CD4-positive, alpha-beta memory T cell (primary cell): ENCODE measurements at regions of chr14 and their contacts with region 1.

Region 1: DNA sequence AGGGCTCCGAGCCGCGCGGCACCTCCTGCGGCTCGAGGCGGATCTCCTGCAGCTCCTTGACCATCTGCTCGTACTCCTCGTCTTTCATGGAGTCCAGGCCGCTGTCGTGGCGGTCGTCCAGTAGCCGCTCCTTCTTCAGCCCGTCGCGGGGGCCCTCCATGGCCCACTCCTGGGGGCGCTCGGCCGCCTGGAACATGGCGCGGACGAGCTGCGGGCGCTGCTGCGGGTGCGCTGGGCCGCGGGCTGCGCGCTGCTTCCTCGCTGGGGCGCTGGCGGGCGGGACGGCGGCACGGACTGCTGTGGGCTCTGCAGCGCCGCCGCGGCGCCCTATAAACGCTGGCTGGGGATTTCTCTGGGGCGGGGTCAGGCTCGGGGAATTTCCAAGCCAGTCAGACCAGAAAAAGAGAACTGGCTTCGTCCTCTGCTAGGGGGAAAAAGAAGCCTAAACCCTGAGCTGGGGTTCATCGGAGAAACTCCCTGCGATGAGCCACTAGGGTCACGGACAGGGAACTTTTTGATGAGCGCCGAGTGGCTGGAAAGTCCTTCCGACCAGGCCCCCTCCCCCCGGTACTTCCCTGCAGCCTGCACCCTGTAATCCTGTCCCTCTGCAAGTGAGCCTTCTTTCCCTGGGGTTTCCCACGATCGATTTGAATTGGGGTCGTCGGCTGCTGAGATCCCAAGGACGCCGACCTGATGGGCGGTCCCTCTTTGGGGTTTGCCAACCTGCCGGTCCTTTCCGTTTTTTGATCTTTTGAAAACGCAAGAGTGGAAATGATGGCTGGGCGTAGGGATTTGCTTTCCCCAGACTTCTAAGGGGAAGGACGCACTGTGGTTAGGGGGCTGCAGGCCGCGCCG is at the start of gene NFKBIA:
- DNase-seq: peak; percentile 94 to 96 (median 95)
- H3K4me3 ChIP-seq: peak within 1 kb of the TSS; percentile 88 to 98
- H3K4me3 Mint-ChIP-seq: peak within 1 kb of the TSS; percentile 93 to 97 (median 95)
- H3K27ac ChIP-seq: peak within 1 kb of the TSS; percentile 100
- H3K27ac Mint-ChIP-seq: peak within 1 kb of the TSS; percentile 99 to 100 (median 99)
- H3K4me1 ChIP-seq: peaks cover 60% of the 10 kb centered on the region
- H3K4me1 Mint-ChIP-seq: peaks cover 34 to 71% (median 49%) of the 10 kb centered on the region in 4 donors
- H3K27me3 ChIP-seq: no peaks in the 10 kb centered on the region
- H3K27me3 Mint-ChIP-seq: peaks cover 0 to 2% of the 10 kb centered on the region in 2 donors
- total RNA-seq, gene NFKBIA: 119 to 120 TPM

Region 2: GRCh38 chr14:34982417-34983147 is 422.1 kb before region 1 on chr14 and contains the start of gene SRP54:
- CTCF ChIA-PET with region 1: interaction called, 6 read pairs
- POLR2A ChIA-PET with region 1: interaction called, 39 read pairs
- intact Hi-C with region 1: loop called (anchors 1 kb)
- DNase-seq: peak; percentile 99 to 100 (median 100)
- H3K4me3 ChIP-seq: peak within 1 kb of the TSS; percentile 87 to 91
- H3K4me3 Mint-ChIP-seq: no peak within 1 kb of the TSS
- H3K27ac ChIP-seq: peak within 1 kb of the TSS; percentile 98
- H3K27ac Mint-ChIP-seq: no peak within 1 kb of the TSS
- H3K4me1 ChIP-seq: peaks cover 47% of the 10 kb centered on the region
- H3K4me1 Mint-ChIP-seq: peaks cover 11 to 23% (median 18%) of the 10 kb centered on the region in 4 donors
- H3K27me3 ChIP-seq: no peaks in the 10 kb centered on the region
- H3K27me3 Mint-ChIP-seq: no peaks in the 10 kb centered on the region
- total RNA-seq, gene SRP54: 59.8 to 62.7 TPM

Region 3: DNA sequence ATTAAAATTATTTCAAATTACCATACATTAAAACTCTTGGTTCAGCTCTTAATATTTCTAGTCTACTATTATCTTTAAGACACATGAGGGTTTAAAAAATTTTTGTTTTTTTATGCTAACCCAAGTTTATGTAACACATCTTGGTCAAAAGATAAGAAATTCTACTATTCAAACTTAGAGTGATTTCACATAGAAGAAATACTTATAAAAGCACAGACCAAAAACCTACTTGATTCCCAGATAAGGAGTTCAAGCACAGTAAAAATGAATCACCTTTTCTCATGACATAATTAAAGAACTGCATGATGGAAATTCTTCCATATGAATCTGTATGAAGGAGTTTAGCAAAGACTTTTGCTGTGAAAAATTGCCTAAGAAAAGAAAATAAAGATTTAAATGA is 296.8 kb before region 1 on chr14:
- CTCF ChIA-PET with region 1: no interaction called
- POLR2A ChIA-PET with region 1: no interaction called
- intact Hi-C with region 1: no loop called
- DNase-seq: no peak
- H3K4me3 ChIP-seq: no peak overlapping the region
- H3K4me3 Mint-ChIP-seq: no peak overlapping the region
- H3K27ac ChIP-seq: no peak overlapping the region
- H3K27ac Mint-ChIP-seq: no peak overlapping the region
- H3K4me1 ChIP-seq: no peaks in the 10 kb centered on the region
- H3K4me1 Mint-ChIP-seq: peaks cover 0 to 7% (median 2%) of the 10 kb centered on the region in 4 donors
- H3K27me3 ChIP-seq: no peaks in the 10 kb centered on the region
- H3K27me3 Mint-ChIP-seq: no peaks in the 10 kb centered on the region

Region 4: DNA sequence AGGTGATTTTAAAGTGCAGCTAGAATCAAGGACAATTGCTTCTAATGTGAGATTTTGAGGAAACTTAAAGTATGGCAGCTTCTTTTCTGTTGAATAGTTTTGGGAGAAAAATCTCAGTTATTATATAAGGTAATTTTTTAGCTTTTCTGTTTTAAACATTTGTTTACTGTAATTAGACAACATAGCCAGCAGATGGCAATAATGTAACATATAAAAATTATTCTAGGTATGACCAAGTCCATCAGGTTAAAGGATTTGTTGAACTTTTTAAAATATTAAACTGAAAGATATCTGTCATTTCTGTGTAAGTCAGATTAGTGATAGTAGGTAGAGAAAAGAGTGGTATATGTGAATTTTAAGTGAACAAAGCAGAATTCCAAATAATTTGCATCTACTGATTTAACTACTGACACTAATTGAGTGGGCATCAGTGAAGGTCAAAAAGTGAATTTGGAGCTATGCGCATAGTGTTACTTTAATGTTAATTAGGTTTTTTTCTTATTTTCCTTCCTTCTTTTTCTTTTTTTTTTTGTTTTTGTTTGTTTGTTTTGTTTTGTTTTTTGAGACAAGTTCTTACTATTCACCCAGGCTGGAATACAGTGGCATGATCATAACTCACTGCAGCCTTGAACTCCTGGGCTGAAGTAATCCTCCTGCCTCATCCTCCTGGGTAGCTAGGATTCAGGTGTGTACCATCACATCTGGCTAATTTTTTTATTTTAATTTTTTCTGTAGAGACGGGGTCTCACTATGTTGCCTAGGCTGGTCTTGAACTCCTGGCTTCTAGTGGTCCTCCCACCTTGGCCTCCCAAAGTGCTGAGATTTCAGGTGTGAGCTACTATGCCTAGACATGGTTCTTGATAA is 263.7 kb before region 1 on chr14:
- CTCF ChIA-PET with region 1: interaction called, 36 read pairs
- POLR2A ChIA-PET with region 1: interaction called, 15 read pairs
- intact Hi-C with region 1: loop called (anchors 1 kb)
- DNase-seq: peak in 4 of 5 donors; percentile 38 to 61 (median 53)
- H3K4me3 ChIP-seq: no peak overlapping the region
- H3K4me3 Mint-ChIP-seq: no peak overlapping the region
- H3K27ac ChIP-seq: no peak overlapping the region
- H3K27ac Mint-ChIP-seq: peak overlapping the region; percentile 14 to 92 (median 84)
- H3K4me1 ChIP-seq: peaks cover 10% of the 10 kb centered on the region
- H3K4me1 Mint-ChIP-seq: peaks cover 15 to 23% (median 19%) of the 10 kb centered on the region in 4 donors
- H3K27me3 ChIP-seq: no peaks in the 10 kb centered on the region
- H3K27me3 Mint-ChIP-seq: no peaks in the 10 kb centered on the region

Region 5: DNA sequence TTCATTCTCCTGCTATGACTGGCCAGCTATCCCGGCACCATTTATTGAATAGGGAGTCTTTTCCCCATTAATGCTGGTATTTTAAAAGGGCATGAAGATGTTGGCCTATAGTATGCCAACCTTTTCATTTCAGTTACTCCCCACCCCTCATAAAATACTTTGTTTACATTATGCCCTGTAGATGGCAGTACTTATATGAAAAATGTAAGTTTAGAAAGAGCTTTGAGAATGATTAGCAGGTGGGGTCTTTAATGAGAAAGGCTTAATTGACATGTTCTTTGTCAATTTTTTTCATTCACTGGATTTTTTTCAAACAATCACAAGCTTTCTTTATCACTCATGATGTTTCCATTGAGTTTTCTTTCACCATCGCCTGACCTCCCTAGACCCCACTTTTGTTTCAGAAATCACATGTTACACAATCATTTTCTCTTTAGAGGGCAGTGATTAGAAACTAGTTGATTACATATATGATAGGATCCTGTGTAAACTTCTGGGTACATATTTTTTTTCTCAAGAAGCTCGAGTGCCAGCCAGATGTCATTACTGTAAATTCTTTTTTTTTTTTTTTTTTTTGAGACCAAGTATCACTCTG is 175.1 kb before region 1 on chr14:
- CTCF ChIA-PET with region 1: interaction called, 50 read pairs
- POLR2A ChIA-PET with region 1: interaction called, 13 read pairs
- intact Hi-C with region 1: loop called (anchors 1 kb)
- DNase-seq: peak in 4 of 5 donors; percentile 21 to 36 (median 28)
- H3K4me3 ChIP-seq: no peak overlapping the region
- H3K4me3 Mint-ChIP-seq: no peak overlapping the region
- H3K27ac ChIP-seq: no peak overlapping the region
- H3K27ac Mint-ChIP-seq: peak overlapping the region in 4 of 7 donors; percentile 8 to 53 (median 28)
- H3K4me1 ChIP-seq: peaks cover 10% of the 10 kb centered on the region
- H3K4me1 Mint-ChIP-seq: peaks cover 16 to 30% (median 24%) of the 10 kb centered on the region in 4 donors
- H3K27me3 ChIP-seq: no peaks in the 10 kb centered on the region
- H3K27me3 Mint-ChIP-seq: no peaks in the 10 kb centered on the region

Region 6: DNA sequence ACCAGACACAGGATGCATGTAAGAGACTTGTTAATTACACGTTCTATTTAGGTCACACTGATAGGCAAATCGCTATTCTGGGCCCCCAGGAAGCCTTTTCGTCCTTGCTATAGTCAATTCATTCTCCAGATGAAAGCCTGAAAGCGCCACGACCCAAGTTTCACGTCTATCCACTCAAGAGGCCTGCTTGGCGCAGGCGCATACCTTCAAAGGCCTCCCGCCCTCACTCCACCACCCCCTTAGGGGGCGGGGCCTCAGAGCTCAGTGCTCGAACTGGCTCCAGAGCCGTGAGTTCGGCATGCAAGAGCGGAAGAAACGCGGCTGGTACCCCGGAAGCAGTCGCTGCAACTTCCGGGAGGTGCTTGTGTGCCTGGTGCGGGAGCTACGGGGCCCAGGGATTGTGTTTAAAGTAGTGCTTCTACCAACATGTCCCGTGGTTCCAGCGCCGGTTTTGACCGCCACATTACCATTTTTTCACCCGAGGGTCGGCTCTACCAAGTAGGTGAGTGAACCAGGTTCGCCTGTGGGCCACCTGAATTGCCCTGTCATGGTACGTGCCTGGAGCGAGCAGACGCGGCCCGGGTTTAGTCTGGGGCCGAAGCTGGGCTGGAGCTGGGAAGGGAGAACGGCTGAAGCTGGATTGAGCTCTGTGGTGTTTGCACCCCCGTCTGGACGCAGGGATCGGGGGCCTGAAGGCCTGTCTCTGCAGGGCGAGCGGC is 112.5 kb before region 1 on chr14 and contains the start of gene PSMA6:
- CTCF ChIA-PET with region 1: interaction called, 17 read pairs
- POLR2A ChIA-PET with region 1: interaction called, 167 read pairs
- intact Hi-C with region 1: loop called (anchors 1 kb)
- DNase-seq: peak; percentile 98 to 100 (median 99)
- H3K4me3 ChIP-seq: peak within 1 kb of the TSS; percentile 77 to 91
- H3K4me3 Mint-ChIP-seq: peak within 1 kb of the TSS; percentile 93 to 99 (median 98)
- H3K27ac ChIP-seq: peak within 1 kb of the TSS; percentile 97
- H3K27ac Mint-ChIP-seq: peak within 1 kb of the TSS; percentile 96 to 99 (median 98)
- H3K4me1 ChIP-seq: peaks cover 48% of the 10 kb centered on the region
- H3K4me1 Mint-ChIP-seq: peaks cover 30 to 65% (median 43%) of the 10 kb centered on the region in 4 donors
- H3K27me3 ChIP-seq: no peaks in the 10 kb centered on the region
- H3K27me3 Mint-ChIP-seq: no peaks in the 10 kb centered on the region
- total RNA-seq, gene PSMA6: 84.6 to 86.2 TPM

Region 7: GRCh38 chr14:35339761-35340406 is 64.8 kb before region 1 on chr14:
- CTCF ChIA-PET with region 1: interaction called, 3 read pairs
- POLR2A ChIA-PET with region 1: interaction called, 23 read pairs
- intact Hi-C with region 1: no loop called
- DNase-seq: no peak
- H3K4me3 ChIP-seq: no peak overlapping the region
- H3K4me3 Mint-ChIP-seq: no peak overlapping the region
- H3K27ac ChIP-seq: no peak overlapping the region
- H3K27ac Mint-ChIP-seq: peak overlapping the region in 1 of 7 donors; percentile 74
- H3K4me1 ChIP-seq: no peaks in the 10 kb centered on the region
- H3K4me1 Mint-ChIP-seq: peaks cover 0 to 9% (median 0%) of the 10 kb centered on the region in 4 donors
- H3K27me3 ChIP-seq: no peaks in the 10 kb centered on the region
- H3K27me3 Mint-ChIP-seq: no peaks in the 10 kb centered on the region

Region 8: DNA sequence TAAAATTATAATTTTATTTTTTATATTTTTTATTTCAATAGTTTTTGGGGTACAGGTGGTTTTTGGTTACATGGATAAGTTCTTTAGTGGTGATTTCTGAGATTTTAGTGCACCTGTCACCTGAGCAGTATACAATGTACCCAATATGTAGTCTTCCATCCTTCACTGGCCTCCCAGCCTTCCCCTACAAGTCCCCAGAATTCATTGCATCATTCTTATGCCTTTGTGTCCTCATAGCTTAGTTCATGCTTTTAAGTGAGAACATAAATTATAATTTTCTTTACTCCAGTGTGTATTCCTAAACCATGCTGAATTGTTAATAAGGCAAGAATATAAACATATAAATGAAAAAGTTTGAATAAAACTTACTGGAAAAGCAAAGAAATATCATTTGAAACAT is 18.9 kb after region 1 on chr14:
- CTCF ChIA-PET with region 1: interaction called, 32 read pairs
- POLR2A ChIA-PET with region 1: interaction called, 159 read pairs
- intact Hi-C with region 1: loop called (anchors 2 kb)
- DNase-seq: no peak
- H3K4me3 ChIP-seq: no peak overlapping the region
- H3K4me3 Mint-ChIP-seq: no peak overlapping the region
- H3K27ac ChIP-seq: no peak overlapping the region
- H3K27ac Mint-ChIP-seq: peak overlapping the region in 1 of 7 donors; percentile 9
- H3K4me1 ChIP-seq: peaks cover 8% of the 10 kb centered on the region
- H3K4me1 Mint-ChIP-seq: peaks cover 4 to 6% (median 6%) of the 10 kb centered on the region in 4 donors
- H3K27me3 ChIP-seq: no peaks in the 10 kb centered on the region
- H3K27me3 Mint-ChIP-seq: no peaks in the 10 kb centered on the region

Region 9: DNA sequence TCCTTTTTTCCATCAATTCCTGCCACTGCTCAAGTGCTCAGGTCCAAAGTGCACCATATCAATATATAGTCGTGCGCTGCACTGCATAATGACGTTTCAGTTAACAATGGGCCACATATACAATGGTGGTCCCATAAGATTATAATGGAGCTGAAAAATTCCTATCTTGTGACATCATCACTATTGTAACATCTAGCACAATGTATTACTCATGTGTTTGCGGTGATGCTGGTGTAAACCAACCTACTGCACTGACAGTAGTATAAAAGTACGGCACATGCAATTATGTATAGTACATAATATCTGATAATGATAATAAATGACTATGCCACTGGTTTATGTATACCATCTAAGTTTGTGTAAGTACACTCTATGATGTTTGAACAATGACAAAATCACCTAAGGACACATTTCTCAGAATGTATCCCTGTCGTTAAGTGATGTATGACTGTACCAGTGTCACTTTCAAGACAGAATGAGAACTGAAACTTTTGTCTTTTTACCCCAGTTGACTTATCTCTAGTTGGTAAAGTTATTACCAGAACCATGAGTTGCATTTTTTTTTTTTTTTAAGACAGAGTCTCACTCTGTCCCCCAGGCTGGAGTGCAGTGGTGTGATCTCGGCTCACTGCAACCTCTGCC is 75.6 kb after region 1 on chr14:
- CTCF ChIA-PET with region 1: no interaction called
- POLR2A ChIA-PET with region 1: no interaction called
- intact Hi-C with region 1: no loop called
- DNase-seq: no peak
- H3K4me3 ChIP-seq: no peak overlapping the region
- H3K4me3 Mint-ChIP-seq: no peak overlapping the region
- H3K27ac ChIP-seq: no peak overlapping the region
- H3K27ac Mint-ChIP-seq: no peak overlapping the region
- H3K4me1 ChIP-seq: no peaks in the 10 kb centered on the region
- H3K4me1 Mint-ChIP-seq: no peaks in the 10 kb centered on the region
- H3K27me3 ChIP-seq: no peaks in the 10 kb centered on the region
- H3K27me3 Mint-ChIP-seq: peaks cover 11 to 14% of the 10 kb centered on the region in 2 donors

Region 10: DNA sequence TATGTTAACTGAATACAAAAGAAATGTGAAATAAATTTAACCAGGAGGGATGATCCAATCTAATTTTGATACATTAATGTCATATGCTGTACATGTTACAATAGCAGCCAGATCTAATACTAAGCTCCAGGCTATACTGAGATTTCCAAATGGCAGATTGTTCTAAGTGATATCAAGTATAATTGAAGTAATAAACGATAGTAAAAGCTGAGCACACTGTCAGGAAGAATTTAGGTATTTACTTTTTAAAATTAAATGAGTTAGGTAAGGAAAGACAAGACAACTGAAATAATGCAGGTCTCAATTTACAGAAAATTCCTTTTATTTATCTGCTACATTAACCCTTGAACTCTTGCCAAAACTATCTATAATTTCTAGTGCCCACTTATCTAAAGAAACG is 169.2 kb after region 1 on chr14:
- CTCF ChIA-PET with region 1: no interaction called
- POLR2A ChIA-PET with region 1: no interaction called
- intact Hi-C with region 1: no loop called
- DNase-seq: no peak
- H3K4me3 ChIP-seq: no peak overlapping the region
- H3K4me3 Mint-ChIP-seq: no peak overlapping the region
- H3K27ac ChIP-seq: no peak overlapping the region
- H3K27ac Mint-ChIP-seq: no peak overlapping the region
- H3K4me1 ChIP-seq: no peaks in the 10 kb centered on the region
- H3K4me1 Mint-ChIP-seq: peaks cover 0 to 4% (median 0%) of the 10 kb centered on the region in 4 donors
- H3K27me3 ChIP-seq: no peaks in the 10 kb centered on the region
- H3K27me3 Mint-ChIP-seq: no peaks in the 10 kb centered on the region